ENCODE measurements at regions of chr20 and their contacts with region 1.

Region 1: DNA sequence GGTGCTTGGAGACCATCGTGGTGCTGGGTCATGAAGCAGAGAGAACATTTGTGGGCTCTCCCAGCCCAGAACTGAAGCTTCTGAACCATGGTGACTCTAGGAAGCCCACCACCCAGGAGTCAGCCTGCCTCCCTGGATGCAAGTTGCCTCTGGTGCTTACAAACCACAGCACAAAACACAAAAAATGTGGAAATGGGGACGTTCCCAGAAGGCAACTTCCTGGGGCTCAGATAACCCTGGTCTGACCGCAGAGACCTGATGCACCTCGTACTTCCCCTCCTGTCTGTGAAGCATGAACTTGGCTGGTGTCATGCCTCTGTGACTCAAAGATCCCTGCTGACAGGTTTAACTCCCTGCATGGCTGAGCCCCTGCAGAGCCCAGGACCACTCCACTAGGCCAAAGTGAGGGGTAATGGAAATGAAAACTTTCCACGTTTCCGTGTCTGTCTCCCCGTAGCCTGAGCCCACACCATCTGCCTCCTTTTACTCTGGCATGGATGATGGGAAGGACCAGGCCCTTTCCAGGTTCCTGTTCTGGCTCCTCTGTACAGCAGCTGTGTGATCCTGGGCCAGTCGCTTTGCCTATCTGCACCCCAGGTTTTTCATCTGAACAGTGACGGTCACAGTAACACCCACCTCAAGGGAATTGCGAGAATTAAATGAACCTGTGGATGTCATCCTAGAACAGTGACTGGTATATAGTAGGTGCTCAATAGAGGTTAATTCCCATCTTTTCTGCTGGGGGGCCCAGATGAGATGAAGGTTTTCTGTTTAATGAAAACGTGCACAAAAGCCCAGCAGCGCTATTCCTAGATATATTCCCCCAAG is 57.7 kb downstream of the PPP1R16B start:
- DNase-seq: peak; percentile 34 to 86
- ATAC-seq: peak; percentile 51 to 75 (median 69)
- H3K4me3 ChIP-seq: no peak overlapping the region
- H3K4me3 Mint-ChIP-seq: no peak overlapping the region
- H3K27ac ChIP-seq: peak overlapping the region; percentile 77
- H3K27ac Mint-ChIP-seq: peak overlapping the region; percentile 74 to 78
- H3K4me1 ChIP-seq: peaks cover 82% of the 10 kb centered on the region
- H3K4me1 Mint-ChIP-seq: peaks cover 52 to 72% of the 10 kb centered on the region in 2 donors
- H3K27me3 ChIP-seq: no peaks in the 10 kb centered on the region
- H3K27me3 Mint-ChIP-seq: no peaks in the 10 kb centered on the region
- CTCF ChIP-seq: no peak

Region 2: GRCh38 chr20:38658879-38659596 is 204.2 kb before region 1 on chr20:
- intact Hi-C with region 1: no loop called
- DNase-seq: peak in 1 of 2 donors; percentile 62
- ATAC-seq: peak; percentile 64 to 79 (median 79)
- H3K4me3 ChIP-seq: no peak overlapping the region
- H3K4me3 Mint-ChIP-seq: no peak overlapping the region
- H3K27ac ChIP-seq: no peak overlapping the region
- H3K27ac Mint-ChIP-seq: no peak overlapping the region
- H3K4me1 ChIP-seq: no peaks in the 10 kb centered on the region
- H3K4me1 Mint-ChIP-seq: peaks cover under 1 to 4% of the 10 kb centered on the region in 2 donors
- H3K27me3 ChIP-seq: peaks cover 5% of the 10 kb centered on the region
- H3K27me3 Mint-ChIP-seq: peaks cover 25 to 27% of the 10 kb centered on the region in 2 donors
- CTCF ChIP-seq: peak; percentile 64

Region 3: GRCh38 chr20:38757145-38757775 is 106.0 kb before region 1 on chr20:
- intact Hi-C with region 1: no loop called
- DNase-seq: no peak
- ATAC-seq: no peak
- H3K4me3 ChIP-seq: no peak overlapping the region
- H3K4me3 Mint-ChIP-seq: no peak overlapping the region
- H3K27ac ChIP-seq: no peak overlapping the region
- H3K27ac Mint-ChIP-seq: no peak overlapping the region
- H3K4me1 ChIP-seq: no peaks in the 10 kb centered on the region
- H3K4me1 Mint-ChIP-seq: no peaks in the 10 kb centered on the region
- H3K27me3 ChIP-seq: no peaks in the 10 kb centered on the region
- H3K27me3 Mint-ChIP-seq: no peaks in the 10 kb centered on the region
- CTCF ChIP-seq: no peak

Region 4: GRCh38 chr20:38842558-38842981 is 20.7 kb before region 1 on chr20:
- intact Hi-C with region 1: loop called (anchors 2 kb)
- DNase-seq: peak in 1 of 2 donors; percentile 69
- ATAC-seq: peak; percentile 17 to 43 (median 37)
- H3K4me3 ChIP-seq: no peak overlapping the region
- H3K4me3 Mint-ChIP-seq: peak overlapping the region; percentile 70
- H3K27ac ChIP-seq: peak overlapping the region; percentile 73
- H3K27ac Mint-ChIP-seq: peak overlapping the region; percentile 89 to 92
- H3K4me1 ChIP-seq: peaks cover 40% of the 10 kb centered on the region
- H3K4me1 Mint-ChIP-seq: peaks cover 64 to 67% of the 10 kb centered on the region in 2 donors
- H3K27me3 ChIP-seq: no peaks in the 10 kb centered on the region
- H3K27me3 Mint-ChIP-seq: no peaks in the 10 kb centered on the region
- CTCF ChIP-seq: no peak